MCF 10A (cell line): ENCODE measurements at regions of chr22 and their contacts with region 1.

Region 1: GRCh38 chr22:21849489-21849888 is 18.0 kb downstream of the MAPK1 start:
- DNase-seq: no peak
- H3K4me3 Mint-ChIP-seq: no peak overlapping the region
- H3K27ac Mint-ChIP-seq: peak overlapping the region; percentile 84
- H3K4me1 Mint-ChIP-seq: peaks cover 24% of the 10 kb centered on the region
- H3K27me3 Mint-ChIP-seq: no peaks in the 10 kb centered on the region
- CTCF ChIP-seq: no peak

Region 2: DNA sequence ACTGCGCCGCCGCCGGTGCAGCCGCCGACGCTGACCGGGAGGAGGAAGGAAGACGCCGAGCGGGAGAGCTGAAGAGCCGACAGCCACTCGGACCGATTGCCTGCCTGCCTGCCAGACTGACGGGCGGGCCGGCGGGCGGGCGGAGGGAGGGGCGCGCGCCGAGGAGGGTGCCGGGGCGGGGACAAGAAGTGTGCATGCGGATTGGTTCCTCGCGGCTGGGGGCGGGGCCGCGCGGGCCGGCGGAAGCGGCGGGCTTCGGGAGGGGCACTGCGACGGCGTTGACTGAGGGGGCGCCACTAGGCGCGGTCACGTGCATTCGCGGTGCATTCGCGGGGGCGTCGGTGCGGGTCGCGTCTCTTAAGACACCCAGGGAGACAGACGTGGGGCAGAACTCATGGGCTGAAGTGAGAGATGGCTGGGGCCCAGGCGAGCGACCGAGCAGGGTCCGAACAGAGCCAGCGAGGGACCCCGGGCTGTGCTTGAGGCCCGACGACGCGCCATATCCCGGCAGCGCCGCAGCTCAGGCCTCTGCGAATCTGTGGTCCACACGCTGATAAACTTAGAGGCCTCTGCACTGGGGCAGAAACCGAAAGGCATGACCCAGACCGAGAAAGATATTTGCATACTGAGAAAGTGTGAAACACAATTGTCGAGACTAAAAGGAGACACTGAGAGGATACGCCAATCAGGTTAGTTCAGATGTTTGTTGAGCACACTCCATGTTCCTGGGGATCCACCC is 18.2 kb after region 1 on chr22 and contains the start of gene MAPK1:
- CTCF ChIA-PET with region 1: no interaction called
- POLR2A ChIA-PET with region 1: interaction called, 31 read pairs
- intact Hi-C with region 1: no loop called
- DNase-seq: peak; percentile 84
- H3K4me3 Mint-ChIP-seq: peak within 1 kb of the TSS; percentile 80
- H3K27ac Mint-ChIP-seq: peak within 1 kb of the TSS; percentile 91
- H3K4me1 Mint-ChIP-seq: peaks cover 34% of the 10 kb centered on the region
- H3K27me3 Mint-ChIP-seq: no peaks in the 10 kb centered on the region
- CTCF ChIP-seq: peak; percentile 17
- total RNA-seq, gene MAPK1: 123 and 145 TPM in 2 replicates